ENCODE measurements at regions of chr10 and their contacts with region 1.

Region 1: DNA sequence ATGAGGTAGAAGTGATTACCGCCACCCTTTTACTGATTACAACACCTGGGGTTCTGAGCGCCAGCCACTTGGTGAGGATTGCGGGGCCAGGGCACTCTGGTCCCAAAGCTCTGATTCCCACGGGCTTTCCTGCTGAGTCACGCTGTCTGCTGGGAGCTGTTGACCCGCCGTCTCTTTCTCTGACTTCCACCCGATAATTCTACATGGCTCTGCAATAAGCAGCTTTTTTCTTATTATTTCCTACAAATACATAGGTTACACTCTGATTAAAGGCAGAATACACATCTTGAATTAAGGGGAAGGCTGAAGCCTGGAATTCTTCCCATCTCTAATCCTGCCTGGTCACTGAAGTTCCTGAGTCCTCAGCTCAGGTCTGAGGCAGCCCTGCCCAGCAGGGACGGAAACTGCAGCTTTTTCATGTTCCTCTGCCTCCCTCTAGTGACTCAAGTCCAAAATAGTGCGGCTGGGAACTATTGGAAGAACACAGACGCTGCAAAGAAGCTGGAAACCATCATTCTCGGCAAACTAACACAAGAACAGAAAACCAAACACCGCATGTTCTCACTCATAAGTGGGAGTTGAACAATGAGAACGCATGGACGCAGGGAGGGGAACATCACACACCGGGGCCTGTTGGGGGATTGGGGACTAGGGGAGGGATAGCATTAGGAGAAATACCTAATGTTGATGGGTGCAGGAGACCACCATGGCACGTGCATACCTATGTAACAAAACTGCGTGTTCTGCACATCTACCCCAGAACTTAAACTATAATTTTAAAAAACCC is 178.3 kb downstream of the PRKCQ start:
- DNase-seq: peak; percentile 82

Region 2: GRCh38 chr10:5889624-5890451 is 511.9 kb before region 1 on chr10 and contains the starts of genes ANKRD16 and FBH1:
- intact Hi-C with region 1: loop called (anchors 5 kb)
- DNase-seq: peak; percentile 99
- total RNA-seq, gene ANKRD16: 3.9 TPM
- total RNA-seq, gene FBH1: 73.8 TPM

Region 3: DNA sequence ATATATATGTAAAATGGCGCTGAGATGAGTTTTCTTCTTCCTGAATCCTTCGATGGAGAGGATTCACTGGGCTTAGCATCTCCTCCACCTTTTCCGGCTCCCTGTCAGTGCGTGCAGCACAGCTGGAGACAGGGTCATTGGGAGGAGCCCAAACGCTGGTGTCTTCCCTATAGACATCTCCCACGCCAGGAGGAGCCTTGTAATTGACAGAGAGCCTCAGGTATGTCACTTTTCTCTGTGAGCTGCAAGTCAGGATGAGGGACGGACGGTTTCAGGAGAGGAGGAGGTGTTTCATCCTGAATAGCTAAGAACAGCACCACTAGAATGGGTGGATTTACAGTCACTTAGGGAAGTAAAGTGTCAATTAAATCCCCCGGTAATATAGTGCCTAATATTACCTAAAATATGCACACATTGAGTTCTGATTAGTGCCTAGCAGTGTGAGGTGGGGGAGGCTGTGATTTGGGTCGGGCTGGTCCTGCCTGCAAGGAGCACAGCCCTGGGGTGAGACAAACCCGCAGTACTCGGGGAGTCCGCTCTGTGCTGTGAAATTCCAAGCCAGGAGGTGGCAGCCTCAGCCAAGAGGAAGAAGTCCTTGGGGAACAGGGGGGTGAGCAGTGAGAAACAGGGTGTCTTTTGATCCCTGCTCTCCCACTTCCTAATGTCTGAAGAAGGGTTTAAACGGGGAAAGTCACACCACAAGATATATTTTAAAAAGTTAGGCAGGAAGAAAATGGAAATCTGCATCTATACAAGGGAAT is 452.6 kb before region 1 on chr10:
- intact Hi-C with region 1: loop called (anchors 10 kb)
- DNase-seq: no peak

Region 4: GRCh38 chr10:6014241-6014761 is 387.5 kb before region 1 on chr10:
- intact Hi-C with region 1: loop called (anchors 5 kb)
- DNase-seq: no peak

Region 5: GRCh38 chr10:6088721-6089390 is 312.9 kb before region 1 on chr10 and contains the start of gene RBM17:
- intact Hi-C with region 1: loop called (anchors 5 kb)
- DNase-seq: peak; percentile 98
- total RNA-seq, gene RBM17: 70.1 TPM

Region 6: DNA sequence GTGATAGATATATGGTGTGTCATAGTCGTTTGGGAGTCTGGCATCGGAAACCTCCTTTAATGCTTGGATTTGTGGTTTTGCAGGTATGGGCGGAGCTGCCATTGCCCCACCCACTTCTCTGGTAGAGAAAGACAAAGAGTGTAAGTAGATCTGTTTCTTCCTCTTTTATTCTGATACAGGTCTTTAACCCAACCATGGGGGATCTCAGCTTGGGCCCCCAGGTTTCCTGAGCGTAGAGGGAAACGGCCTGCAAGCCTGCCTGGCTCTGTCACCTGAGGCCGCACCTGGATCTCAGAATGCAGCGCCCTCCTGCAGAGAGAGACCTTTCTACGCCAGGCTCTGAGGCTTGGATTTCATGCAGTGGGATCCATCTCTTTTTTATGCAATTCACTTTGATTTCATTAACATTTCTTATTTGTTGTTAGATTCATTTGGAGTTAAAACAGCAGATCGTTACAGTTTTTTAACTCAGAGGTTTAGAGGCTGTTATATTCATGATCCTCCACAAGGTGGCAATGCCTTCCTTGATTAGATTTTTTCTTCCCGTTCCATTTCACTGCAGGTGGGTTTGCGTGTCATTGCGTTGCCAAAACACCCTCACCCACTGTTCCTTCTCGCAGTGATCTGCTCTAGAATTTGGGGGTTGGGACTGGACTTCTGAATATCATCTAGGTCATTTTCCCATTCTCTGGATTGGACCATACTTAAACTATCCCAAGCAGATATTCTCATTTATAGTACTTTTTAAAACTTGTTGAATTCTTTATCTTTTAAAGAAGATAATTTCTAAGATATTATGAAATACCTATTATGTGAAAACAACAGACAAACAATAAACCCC is 292.9 kb before region 1 on chr10:
- intact Hi-C with region 1: loop called (anchors 2 kb)
- DNase-seq: no peak

Region 7: DNA sequence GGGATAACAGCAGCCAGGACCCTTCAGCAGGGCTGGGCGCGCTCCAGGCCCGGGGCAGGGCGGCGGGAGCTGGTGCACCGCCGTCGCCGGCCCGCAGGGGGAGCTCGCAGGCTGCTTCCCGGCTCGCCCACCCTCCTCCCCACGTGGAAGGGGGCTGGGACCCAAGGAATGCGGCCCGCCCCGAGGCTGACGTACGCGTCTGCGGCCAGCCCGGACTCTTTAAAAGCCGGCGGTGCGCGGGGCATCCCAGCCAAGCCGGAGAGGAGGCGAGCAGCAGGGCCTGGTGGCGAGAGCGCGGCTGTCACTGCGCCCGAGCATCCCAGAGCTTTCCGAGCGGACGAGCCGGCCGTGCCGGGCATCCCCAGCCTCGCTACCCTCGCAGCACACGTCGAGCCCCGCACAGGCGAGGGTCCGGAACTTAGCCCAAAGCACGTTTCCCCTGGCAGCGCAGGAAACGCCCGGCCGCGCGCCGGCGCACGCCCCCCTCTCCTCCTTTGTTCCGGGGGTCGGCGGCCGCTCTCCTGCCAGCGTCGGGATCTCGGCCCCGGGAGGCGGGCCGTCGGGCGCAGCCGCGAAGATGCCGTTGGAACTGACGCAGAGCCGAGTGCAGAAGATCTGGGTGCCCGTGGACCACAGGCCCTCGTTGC is 198.9 kb before region 1 on chr10 and contains the start of gene PFKFB3:
- intact Hi-C with region 1: loop called (anchors 2 kb)
- DNase-seq: peak; percentile 99
- total RNA-seq, gene PFKFB3: 13.8 TPM

Region 8: DNA sequence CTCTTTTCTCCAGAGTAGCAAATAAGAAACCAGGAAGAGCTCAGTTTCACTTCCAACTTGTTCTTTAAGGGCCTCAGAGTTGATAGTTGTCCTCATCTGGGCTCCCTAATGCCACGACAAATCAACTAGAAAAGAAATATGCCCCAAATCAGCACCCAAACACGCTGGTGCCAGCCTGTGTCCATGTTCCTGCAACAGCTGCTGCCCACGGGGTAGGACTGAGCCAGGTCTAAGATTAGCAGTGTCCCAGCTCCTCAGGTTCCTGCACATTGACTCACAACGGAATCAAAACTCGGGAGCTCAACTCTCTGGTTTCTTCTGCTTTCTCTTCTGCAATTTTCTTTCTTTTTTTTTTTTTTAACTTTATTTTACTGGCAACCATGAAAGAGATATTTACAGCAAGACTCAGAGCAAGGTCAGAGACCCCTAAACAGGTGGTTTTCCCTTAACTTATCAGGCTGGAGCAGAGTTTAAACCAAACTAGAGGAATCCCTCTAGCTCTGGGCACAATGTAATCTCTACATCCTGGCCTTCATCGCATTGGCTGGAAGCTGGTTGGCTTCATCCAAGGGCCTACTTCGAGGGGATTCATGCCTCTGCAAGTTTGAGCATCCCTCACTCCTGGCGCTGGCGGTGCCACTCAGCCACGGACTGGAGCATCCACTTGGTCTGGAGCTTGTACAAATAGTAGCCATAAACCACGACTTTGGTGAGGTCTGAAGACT is 72.9 kb before region 1 on chr10:
- intact Hi-C with region 1: no loop called
- DNase-seq: no peak

Region 9: GRCh38 chr10:6431861-6432260 is 30.1 kb after region 1 on chr10:
- intact Hi-C with region 1: no loop called
- DNase-seq: no peak

Region 10: GRCh38 chr10:7130191-7130911 is 728.6 kb after region 1 on chr10:
- intact Hi-C with region 1: no loop called
- DNase-seq: no peak

Measured in cardiac septum (tissue), 1 donor.